Posterior cingulate gyrus (tissue), 11 donors: ENCODE measurements at regions of chr10 and their contacts with region 1.

Region 1: GRCh38 chr10:104121520-104122224 is at the start of gene SFR1:
- DNase-seq: peak; percentile 95 to 100 (median 99)

Region 2: GRCh38 chr10:103888113-103888841 is 233.4 kb before region 1 on chr10:
- intact Hi-C with region 1: loop called (anchors 2 kb)
- DNase-seq: peak in 2 of 10 donors; percentile 21 to 31

Region 3: DNA sequence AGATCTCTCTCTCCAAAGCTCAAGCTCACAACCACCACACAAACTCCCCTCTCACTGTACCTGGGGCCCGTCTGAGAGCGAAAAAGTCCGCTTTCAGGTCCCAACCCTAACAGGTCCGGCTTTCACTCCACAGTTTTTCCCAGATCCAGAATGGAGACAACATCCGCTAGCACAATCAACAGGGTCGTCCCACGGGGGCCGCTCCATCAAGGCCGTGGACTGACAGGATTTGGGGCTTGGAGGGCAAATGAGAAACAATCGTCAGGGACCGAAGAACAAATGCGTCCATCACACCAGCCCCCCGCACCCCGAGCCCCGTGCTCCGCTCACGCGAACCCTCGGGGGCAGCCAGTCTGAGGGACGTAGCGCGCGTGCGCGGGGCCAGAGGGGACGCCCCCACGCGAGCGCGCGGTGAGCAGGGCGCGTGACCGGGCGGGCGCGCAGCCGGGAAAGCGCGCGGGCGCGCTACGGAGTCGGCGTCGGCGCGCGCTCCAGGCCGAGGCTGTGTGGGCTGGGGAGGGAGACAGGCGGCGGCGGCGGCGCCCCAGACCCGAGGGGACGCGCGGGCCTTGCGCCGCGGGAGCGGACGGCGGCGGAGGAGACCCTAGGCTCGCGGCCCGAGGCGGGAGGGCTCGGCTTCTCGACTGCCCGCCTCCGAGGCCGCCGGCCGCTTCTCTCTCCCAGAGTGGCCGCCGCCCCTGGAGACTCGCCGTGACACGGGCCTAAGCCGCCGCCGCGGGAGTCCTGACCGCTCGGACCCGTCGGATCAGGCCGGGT is 154.8 kb before region 1 on chr10 and contains the start of gene SLK:
- intact Hi-C with region 1: loop called (anchors 1 kb)
- DNase-seq: peak; percentile 62 to 97 (median 74)

Region 4: DNA sequence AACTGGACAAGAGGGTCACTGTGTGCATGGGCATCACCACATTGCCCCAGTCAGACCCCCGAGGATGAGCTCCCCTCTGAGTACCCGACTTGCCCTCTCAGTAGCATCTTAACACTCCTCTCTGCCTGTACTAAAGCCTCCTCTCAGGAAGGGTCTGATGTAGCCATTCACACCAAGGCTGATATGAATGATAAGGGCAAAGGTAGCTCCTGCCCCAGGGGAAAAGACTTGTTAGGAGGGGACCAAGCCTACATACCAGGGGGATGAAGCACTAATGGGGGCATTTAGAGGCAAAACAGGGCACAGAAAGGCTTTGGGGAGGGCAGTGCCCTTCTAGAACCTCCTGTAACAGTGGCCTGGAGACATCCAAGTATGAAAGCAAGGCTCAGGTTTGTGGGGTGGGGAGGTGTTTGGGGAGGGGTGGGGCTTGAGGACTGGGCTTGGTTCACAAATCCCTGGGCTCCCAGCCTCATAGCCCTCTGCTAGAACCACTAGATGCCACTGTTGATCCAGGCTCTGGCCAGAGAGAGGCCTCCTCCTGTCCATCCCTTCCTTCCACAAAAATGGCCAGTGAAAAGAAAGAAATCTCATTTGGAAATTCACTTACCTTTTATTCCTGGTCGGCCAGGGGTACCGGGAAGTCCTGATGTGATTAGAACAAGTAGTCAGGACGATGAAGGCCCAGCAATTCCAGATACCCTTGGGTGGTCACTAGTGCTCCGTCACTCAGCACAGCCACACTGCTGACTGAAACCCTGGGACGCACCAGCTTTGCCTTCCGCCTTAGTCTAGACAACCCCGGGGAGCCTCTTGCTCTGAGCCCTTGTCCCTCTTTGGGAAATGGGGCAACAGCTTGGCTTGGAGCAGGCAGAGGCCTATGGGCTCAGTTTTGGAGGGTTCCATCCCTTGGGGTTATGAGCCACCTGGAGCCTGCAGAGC is 76.3 kb before region 1 on chr10:
- intact Hi-C with region 1: loop called (anchors 1 kb)
- DNase-seq: peak in 6 of 10 donors; percentile 57 to 92 (median 65)

Region 5: DNA sequence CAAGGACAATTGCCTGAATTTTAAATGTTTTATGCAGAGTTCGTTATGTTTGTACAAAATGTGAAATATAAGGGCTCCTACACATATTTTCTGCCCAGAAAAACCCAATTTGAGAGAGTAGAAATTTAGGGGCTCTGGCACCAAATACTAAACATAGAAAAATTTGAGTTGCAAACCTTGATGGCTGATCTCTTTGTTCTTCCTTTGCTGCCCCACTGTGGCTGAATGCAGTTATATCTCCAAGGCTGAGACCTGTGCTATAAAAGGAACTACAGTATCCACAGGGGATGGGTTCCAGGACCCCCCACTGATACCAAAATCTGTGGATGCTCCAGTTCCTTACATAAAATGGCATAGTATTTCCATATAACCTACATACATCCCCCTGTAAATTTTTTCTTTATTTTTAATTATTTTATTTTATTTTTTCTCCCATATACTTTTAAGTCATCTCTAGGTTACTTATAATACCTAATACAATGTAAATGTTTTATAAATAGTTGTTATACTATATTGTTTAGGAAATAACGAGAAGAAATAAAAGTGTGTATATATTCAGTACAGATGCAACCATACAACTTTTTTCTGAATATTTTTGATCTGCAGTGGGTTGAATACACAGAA is 88.0 kb after region 1 on chr10:
- intact Hi-C with region 1: loop called (anchors 5 kb)
- DNase-seq: peak in 6 of 10 donors; percentile 16 to 69 (median 58)